ENCODE measurements at regions of chr17 and their contacts with region 1.

Region 1: DNA sequence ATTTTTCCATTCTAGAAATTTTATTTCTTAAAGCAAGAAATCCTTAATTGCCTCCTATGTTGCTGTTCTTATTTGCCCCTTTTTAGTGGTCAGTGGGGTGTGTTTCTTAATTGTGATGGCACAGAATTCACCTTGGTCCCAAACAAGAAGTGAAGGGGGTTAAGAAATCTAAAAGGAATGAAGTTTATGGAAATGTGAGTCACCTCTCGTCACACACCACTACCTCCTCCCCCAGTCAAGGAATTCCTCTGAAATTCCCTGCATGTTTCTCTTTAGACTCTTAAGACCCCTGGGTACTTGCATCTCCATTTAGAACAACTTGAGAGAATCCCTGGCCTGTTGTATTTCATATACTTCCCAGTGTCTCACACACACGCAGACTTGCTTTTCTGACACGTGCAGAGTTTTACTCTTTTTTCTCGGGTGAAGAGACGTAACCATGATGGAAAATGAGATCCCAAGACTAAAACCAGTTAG is 247.4 kb downstream of the PRKCA start:
- DNase-seq: no peak
- ATAC-seq: no peak
- H3K4me3 ChIP-seq: no peak overlapping the region
- H3K27ac ChIP-seq: no peak overlapping the region
- H3K4me1 ChIP-seq: peaks cover 71% of the 10 kb centered on the region
- H3K27me3 ChIP-seq: no peaks in the 10 kb centered on the region
- CTCF ChIP-seq: no peak
- EP300 ChIP-seq: no peak
- POLR2A ChIP-seq: no peak
- RAD21 ChIP-seq: no peak

Region 2: GRCh38 chr17:66508896-66509843 is 40.6 kb before region 1 on chr17:
- CTCF ChIA-PET with region 1: no interaction called
- POLR2A ChIA-PET with region 1: no interaction called
- in situ Hi-C with region 1: no loop called
- intact Hi-C with region 1: loop called (anchors 5 kb)
- DNase-seq: no peak
- ATAC-seq: no peak; the same call in 2 of the 3 replicates
- H3K4me3 ChIP-seq: no peak overlapping the region
- H3K27ac ChIP-seq: no peak overlapping the region
- H3K4me1 ChIP-seq: peaks cover 34% of the 10 kb centered on the region
- H3K27me3 ChIP-seq: no peaks in the 10 kb centered on the region
- CTCF ChIP-seq: no peak
- EP300 ChIP-seq: no peak
- POLR2A ChIP-seq: no peak
- RAD21 ChIP-seq: no peak